Posterior vena cava (tissue), 2 donors: ENCODE measurements at regions of chr11 and their contacts with region 1.

Region 1: DNA sequence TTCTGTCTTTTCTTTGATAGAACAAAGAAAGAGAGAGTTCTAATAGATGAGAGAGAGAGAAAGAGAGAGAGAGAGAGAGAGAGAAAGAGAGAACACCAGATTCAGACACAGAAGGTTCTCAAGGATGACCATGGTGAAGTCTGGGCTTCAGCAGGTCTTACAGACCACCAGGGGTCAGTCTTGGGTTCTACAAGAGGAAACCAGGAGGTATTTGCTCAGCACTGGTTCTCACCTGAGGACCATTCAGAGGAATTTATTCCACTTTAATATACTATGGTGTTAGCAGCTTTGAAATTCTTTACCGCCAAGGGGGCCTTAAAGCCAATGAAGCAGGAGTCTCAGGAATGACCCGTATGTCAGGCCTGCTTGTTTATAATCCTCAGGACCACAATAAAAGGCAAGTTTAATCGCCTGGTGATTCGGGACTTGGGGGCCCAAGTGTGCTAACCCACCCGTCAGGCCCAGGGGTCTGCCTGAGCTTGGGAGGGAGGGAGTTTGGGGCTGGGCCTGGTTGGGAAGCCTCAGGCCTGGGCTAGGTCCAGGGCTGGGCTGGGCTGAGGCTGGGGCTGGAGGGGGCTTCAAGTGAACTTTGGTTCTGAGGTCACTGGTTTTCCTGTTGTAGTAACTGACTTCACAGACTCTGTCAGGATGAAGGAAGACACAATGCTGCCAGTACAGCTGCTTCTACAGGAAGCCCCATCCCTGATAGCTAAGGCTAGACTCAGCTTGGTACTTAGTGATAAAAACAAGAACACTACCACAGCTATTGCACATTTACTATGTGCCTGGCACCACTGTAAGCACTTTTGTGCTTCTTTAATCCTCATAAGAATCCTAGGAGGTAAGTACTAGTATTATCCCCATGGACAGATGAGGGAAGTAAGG is 179.2 kb upstream of the ZBED5 start:
- DNase-seq: no peak

Region 2: DNA sequence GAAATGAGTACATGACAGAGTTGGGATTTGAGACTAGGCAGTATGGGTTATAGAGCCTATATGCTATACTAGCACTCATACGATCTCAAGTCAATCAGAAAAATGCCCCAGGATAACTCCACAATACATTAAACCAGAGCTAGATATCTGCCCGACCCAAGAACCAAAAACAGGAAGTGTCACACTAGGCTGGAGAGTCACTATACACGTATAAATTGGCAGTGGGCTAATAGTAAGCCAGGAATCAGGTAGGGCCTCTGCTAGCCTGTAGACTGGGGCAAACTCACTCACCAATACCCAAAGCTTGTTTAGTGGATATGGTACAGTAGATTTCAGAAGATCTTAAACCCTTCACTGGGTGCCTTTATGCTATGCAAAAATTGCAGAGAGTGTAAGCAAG is 212.2 kb before region 1 on chr11:
- intact Hi-C with region 1: no loop called
- DNase-seq: no peak

Region 3: DNA sequence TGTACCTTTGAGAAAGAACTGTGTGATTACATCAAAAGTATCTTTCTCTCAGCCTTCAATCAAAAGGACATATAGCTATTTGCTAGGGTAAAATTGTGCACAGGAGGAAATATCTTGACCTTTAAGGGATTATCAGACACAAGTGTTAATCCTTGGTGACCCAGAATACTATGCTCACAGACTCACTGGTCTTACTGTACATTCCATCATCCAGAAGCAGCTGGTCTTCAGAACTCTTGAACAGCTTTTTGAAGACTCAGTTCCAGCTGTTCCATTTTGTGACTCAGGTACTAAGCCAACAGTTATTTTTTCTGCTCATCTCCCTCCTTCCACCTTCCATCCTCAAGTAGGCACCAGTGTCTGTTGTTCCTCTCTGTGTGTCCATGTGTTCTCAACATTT is 199.0 kb before region 1 on chr11:
- intact Hi-C with region 1: no loop called
- DNase-seq: no peak

Region 4: GRCh38 chr11:11148104-11148509 is 111.0 kb after region 1 on chr11:
- intact Hi-C with region 1: loop called (anchors 5 to 10 kb)
- DNase-seq: peak; percentile 95

Region 5: DNA sequence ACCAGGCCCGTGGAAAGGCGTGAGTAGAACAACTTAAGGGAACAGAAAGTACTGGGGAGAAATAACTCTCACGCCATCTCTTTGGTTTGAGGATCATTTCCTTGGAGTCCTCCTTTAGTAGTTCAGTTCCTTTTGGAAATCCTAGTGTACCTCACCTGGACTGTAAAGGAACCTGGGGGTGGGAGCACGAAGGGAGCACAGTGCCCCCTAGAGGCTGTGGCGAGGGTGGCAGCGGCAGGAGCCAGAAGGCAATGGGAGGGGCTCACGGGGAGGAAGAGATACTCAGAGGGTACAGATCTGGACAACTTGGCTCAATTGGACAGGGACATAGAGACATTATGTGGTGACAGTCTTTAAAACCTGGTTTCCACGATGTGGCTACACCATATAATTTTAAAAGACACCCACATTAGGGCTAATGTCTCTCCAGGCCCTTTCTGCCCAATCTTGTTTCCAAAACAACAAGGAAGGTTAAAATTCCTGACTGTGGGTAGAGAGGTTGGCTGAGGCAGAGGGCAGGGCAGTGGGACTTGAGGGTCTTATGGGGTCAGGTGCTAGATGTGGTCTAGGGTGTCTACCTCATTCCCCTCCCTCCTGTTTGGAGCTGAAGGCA is 229.0 kb after region 1 on chr11:
- intact Hi-C with region 1: loop called in 1 of 2 experiments (anchors 10 kb)
- DNase-seq: no peak

Region 6: DNA sequence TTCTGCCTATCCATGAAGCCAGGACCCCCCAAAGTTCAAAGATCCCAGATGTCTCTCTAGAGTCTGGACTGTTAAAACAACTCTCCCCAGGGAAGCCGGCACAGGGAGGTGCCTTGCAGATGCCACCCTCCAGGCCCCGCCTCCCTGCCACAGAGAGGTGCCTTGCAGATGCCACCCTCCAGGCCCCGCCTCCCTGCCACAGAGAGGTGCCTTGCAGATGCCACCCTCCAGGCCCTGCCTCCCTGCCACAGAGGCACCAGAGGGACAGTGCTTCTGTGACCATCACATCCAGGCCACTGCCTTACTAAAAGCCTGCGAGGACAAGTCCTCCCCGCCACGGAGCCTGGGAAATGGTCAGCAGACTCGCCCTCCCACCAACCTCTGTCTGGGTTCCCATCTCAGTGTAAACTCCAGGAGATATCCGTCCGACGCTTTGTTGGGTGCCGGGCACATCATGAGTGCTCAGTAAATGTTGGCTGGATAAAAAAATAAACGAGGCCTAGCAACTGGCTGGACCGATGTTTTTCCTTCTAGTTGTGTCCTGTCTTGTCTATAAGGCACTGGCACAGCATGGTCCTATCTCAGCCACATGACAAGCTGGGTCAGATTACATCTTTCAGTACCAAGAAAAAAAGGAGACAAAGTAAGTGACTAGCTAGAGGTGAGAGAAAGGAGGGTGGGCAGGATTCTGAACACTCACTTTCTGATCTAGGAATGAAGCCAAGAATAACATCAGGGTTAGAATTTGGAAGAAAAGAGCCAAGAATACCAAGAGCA is 407.1 kb after region 1 on chr11:
- intact Hi-C with region 1: no loop called
- DNase-seq: no peak

Region 7: DNA sequence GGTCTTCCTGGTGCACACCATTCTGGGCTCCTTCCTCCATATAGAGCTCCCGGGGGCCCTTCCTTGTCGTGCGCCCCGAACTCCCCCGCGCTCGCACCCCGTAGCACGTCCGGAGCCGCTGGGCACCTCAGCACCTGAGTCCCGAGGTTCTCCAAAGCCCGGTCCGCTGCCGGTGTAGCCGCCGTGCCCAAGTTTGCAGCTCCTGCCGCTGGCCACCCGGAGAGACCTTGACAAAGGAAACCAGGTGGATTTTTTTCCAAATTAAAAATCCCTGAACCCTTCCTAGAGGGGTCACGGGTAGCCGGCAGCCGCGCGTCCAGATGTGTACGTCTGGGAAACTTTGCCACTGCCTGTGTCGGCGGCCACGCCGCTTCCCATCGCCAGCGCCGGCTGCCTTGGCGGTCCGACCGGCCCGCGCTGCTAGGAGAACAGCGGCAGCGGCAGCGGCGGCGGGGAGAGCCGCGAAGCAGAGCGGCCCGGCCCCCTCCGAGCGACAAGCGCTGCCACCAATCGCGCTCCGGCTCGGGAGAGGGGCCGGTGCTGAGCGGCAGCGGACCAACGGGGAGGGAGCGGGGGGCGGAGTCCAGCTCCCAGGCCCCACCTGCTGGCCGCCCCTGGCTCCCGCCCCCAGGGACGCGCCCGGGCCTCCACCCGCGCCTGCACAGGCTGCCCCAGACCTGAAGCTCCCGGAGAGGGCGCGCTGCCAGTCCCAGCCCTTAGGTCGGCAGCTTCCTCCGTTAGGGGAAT is 584.7 kb after region 1 on chr11 and contains the start of gene GALNT18:
- intact Hi-C with region 1: loop called in 1 of 2 experiments (anchors 10 kb)
- DNase-seq: peak; percentile 96
- total RNA-seq, gene GALNT18: 21.4 to 28.0 TPM